ENCODE measurements at regions of chr14 and their contacts with region 1.

Region 1: DNA sequence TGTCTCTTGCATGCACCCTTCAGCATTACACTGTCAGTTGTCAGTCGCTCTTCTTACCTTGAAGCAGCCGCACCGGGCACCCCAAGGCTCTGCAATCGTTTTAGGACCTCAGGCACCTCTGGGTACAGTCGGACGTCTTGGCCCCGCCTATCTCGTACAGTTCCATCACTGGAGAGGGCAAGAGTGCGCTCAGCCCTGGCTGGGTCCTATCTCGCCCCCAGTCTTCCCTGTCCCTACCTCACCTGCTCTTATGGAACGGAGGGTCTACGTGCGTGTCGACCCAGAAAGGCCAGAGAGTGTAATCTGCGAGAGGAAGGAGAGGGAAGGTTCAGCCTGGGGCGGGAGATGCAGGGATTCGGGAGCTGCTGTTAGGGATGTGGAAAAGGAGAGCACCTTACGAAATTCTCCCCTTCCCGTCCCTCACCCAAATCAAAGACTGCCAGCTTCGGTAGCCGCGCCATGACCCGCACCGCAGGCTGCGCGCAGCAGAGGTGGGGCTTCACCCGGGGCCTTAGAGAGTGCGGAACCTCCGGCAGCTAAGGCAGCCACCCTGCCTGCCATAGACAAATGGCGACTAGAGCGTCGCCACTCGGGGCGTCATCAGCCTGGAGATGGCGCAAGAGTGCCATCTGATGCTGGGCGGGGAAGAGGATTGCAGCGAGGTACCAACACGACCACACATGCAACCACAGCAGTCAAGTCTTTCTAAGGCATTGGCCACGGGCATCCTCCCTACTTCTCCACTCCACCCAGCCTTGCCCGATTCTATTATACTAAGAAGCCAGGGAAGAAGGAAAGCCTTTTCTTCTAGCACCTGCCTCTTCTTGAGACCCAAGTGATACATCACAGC is at the start of gene MDP1:
- DNase-seq: peak; percentile 86
- H3K4me3 ChIP-seq: peak within 1 kb of the TSS; percentile 73 to 82
- H3K27ac ChIP-seq: peak within 1 kb of the TSS; percentile 71 to 88
- H3K4me1 ChIP-seq: peaks cover 9 to 17% of the 10 kb centered on the region in 2 experiments; a peak in 3 of 4 replicates
- H3K27me3 ChIP-seq: no peaks in the 10 kb centered on the region
- CTCF ChIP-seq: peak; percentile 70
- EP300 ChIP-seq: no peak
- RAD21 ChIP-seq: peak; percentile 69
- polyA plus RNA-seq, gene MDP1: 36.4 and 36.7 TPM in 2 replicates

Region 2: GRCh38 chr14:24195191-24196070 is 20.3 kb before region 1 on chr14 and contains the start of gene TM9SF1:
- CTCF ChIA-PET with region 1: interaction called, 7 read pairs
- POLR2A ChIA-PET with region 1: interaction called, 15 read pairs
- DNase-seq: peak; percentile 94
- H3K4me3 ChIP-seq: peak within 1 kb of the TSS; percentile 84 to 85
- H3K27ac ChIP-seq: peak within 1 kb of the TSS; percentile 88 to 89
- H3K4me1 ChIP-seq: peaks cover 11% of the 10 kb centered on the region in 2 experiments; a peak in 2 of 4 replicates
- H3K27me3 ChIP-seq: no peaks in the 10 kb centered on the region
- CTCF ChIP-seq: no peak
- EP300 ChIP-seq: peak in 1 of 2 experiments; percentile 7; a peak in 1 of 4 replicates
- RAD21 ChIP-seq: no peak
- polyA plus RNA-seq, gene TM9SF1: 48.7 and 54.8 TPM in 2 replicates

Region 3: GRCh38 chr14:24232121-24232644 is 16.5 kb after region 1 on chr14 and contains the start of gene NEDD8:
- CTCF ChIA-PET with region 1: interaction called, 20 read pairs
- POLR2A ChIA-PET with region 1: interaction called, 3 read pairs
- DNase-seq: peak; percentile 88
- H3K4me3 ChIP-seq: peak within 1 kb of the TSS; percentile 82 to 93
- H3K27ac ChIP-seq: peak within 1 kb of the TSS; percentile 89 to 99
- H3K4me1 ChIP-seq: peaks cover 19 to 24% of the 10 kb centered on the region in 2 experiments; a peak in 3 of 4 replicates
- H3K27me3 ChIP-seq: no peaks in the 10 kb centered on the region
- CTCF ChIP-seq: no peak
- EP300 ChIP-seq: no peak
- RAD21 ChIP-seq: no peak
- polyA plus RNA-seq, gene NEDD8: 465 and 534 TPM in 2 replicates